Panc1 (cell line): ENCODE measurements at regions of chr2 and their contacts with region 1.

Region 1: GRCh38 chr2:135600915-135601314 is 69.6 kb downstream of the R3HDM1 start:
- DNase-seq: no peak
- ATAC-seq: no peak
- H3K4me3 ChIP-seq: no peak overlapping the region
- H3K27ac ChIP-seq: no peak overlapping the region
- H3K4me1 ChIP-seq: no peaks in the 10 kb centered on the region
- H3K27me3 ChIP-seq: no peaks in the 10 kb centered on the region
- CTCF ChIP-seq: no peak; the same call in 1 of the 2 replicates

Region 2: GRCh38 chr2:135582383-135582782 is 18.5 kb before region 1 on chr2:
- CTCF ChIA-PET with region 1: no interaction called
- POLR2A ChIA-PET with region 1: interaction called, 13 read pairs
- in situ Hi-C with region 1: no loop called
- intact Hi-C with region 1: no loop called
- DNase-seq: no peak
- ATAC-seq: no peak
- H3K4me3 ChIP-seq: no peak overlapping the region
- H3K27ac ChIP-seq: no peak overlapping the region
- H3K4me1 ChIP-seq: no peaks in the 10 kb centered on the region
- H3K27me3 ChIP-seq: no peaks in the 10 kb centered on the region
- CTCF ChIP-seq: no peak

Region 3: DNA sequence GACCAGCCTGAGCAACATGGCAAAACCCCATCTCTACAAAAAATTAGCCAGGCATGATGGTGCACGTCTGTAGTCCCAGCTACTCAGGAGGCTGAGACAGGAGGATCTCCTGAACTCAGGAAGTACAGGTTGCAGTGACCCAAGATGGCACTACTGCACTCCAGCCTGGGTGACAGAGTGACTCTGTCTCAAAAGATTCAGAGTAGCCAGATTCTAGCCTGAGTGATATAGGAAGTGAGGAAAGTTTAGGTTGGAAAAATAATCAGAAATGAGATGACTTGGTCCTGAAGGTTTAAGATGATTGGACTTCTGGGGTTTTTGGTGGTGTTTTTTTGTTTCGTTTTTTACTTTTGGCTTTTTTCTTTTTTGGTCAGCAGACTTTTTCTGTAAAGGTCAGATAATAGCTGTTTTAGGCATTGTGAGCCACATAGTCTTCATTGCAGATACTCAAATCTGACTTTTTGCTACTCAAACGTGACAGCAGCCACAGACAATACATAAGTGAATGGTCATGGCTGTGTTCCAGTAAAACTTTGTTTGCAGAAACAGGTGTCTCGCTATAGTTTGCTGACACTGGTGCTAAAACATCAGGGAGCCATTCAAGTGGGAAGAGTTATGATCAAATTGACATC is 36.7 kb after region 1 on chr2:
- CTCF ChIA-PET with region 1: no interaction called
- POLR2A ChIA-PET with region 1: no interaction called
- in situ Hi-C with region 1: no loop called
- intact Hi-C with region 1: no loop called
- DNase-seq: no peak
- ATAC-seq: no peak
- H3K4me3 ChIP-seq: no peak overlapping the region
- H3K27ac ChIP-seq: no peak overlapping the region
- H3K4me1 ChIP-seq: no peaks in the 10 kb centered on the region
- H3K27me3 ChIP-seq: no peaks in the 10 kb centered on the region
- CTCF ChIP-seq: no peak